PC-3 (cell line): ENCODE measurements at regions of chr5 and their contacts with region 1.

Region 1: DNA sequence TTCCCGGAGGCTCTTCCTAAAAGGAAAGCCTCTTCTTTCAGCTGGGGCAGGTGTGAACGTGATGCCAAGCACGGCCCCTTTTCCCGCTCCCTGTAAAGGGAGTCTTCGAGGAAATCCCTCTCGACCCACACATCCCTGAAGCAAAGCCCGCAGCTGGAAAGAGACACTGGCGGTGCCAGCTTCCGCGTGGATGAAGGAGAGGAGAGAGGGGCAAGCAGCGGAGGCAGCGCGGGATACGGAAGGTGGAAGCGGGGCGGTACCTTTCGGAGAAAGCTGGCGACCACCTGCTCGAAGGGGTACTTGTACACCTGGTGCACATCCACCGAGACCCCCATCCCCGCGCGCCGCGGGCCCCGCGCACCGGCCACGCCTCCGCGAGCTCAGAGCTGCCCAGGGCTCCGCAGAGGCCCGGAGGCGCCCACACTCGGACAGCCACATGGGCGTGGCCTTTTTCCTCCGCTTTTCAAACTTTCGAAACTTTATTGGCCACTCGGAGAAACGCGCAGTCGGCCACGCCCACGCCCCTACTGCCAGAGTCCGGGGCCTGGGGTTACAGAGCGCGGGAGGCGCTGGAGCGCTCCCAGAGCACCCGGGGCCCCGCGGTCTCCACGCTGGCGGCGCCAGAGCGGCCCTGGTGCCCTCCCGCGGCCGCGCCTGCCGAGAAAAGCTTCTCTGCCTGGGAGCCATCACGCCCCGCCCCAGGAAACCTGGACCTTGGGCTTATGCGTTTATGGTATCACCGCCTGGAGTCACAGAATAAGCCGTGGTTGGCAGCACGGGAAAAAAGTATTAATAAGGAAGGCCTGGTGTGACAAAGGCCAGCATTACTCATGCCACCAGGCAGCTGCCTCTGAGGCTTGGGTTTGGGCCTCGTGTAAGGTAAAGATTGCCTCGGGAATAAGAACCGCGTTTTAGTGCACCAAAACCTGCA is at the start of gene PRELID2:
- DNase-seq: peak; percentile 88
- ATAC-seq: peak; percentile 84
- H3K4me3 ChIP-seq: peak within 1 kb of the TSS; percentile 76
- H3K27ac ChIP-seq: peak within 1 kb of the TSS; percentile 27
- H3K4me1 ChIP-seq: peaks cover 12% of the 10 kb centered on the region
- H3K27me3 ChIP-seq: no peaks in the 10 kb centered on the region
- CTCF ChIP-seq: peak; percentile 22; the same call in 1 of the 2 replicates
- total RNA-seq, gene PRELID2: 23.7 and 33.2 TPM in 2 replicates

Region 2: GRCh38 chr5:145872486-145872885 is 37.3 kb after region 1 on chr5:
- CTCF ChIA-PET with region 1: no interaction called
- POLR2A ChIA-PET with region 1: no interaction called
- intact Hi-C with region 1: no loop called
- DNase-seq: no peak
- ATAC-seq: no peak
- H3K4me3 ChIP-seq: no peak overlapping the region
- H3K27ac ChIP-seq: no peak overlapping the region
- H3K4me1 ChIP-seq: no peaks in the 10 kb centered on the region
- H3K27me3 ChIP-seq: no peaks in the 10 kb centered on the region
- CTCF ChIP-seq: no peak

Region 3: DNA sequence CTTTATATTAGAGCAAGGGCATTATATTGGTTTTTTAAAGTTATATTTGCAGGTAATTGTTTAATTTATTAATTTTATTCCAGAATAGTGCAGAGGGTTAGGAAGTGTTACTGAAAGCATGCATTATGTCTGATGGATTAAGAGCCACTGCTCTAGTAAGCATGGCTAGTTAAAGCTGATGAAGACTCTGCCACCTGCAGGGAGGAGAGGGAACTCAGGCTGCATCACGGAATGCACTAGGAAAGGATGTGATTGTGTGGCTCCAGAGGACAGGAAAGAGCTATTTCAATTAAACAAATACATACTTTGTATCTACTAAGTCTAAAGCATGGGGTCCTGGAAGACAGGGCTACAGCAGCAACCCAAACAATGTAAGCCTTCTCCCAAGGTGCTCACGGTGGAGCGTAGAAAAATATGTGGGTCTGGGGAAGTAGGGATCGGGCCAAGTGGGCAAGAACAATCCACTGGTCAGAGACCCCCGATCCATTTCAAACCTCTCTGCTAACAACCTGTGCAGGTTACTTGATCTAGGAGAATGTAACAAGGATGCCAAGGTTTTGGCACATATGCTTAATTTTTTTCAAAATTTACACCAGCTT is 52.9 kb after region 1 on chr5:
- CTCF ChIA-PET with region 1: interaction called, 3 read pairs
- POLR2A ChIA-PET with region 1: no interaction called
- intact Hi-C with region 1: loop called (anchors 2 kb)
- DNase-seq: peak; percentile 68
- ATAC-seq: peak; percentile 99
- H3K4me3 ChIP-seq: no peak overlapping the region
- H3K27ac ChIP-seq: no peak overlapping the region
- H3K4me1 ChIP-seq: no peaks in the 10 kb centered on the region
- H3K27me3 ChIP-seq: no peaks in the 10 kb centered on the region
- CTCF ChIP-seq: peak; percentile 75

Region 4: DNA sequence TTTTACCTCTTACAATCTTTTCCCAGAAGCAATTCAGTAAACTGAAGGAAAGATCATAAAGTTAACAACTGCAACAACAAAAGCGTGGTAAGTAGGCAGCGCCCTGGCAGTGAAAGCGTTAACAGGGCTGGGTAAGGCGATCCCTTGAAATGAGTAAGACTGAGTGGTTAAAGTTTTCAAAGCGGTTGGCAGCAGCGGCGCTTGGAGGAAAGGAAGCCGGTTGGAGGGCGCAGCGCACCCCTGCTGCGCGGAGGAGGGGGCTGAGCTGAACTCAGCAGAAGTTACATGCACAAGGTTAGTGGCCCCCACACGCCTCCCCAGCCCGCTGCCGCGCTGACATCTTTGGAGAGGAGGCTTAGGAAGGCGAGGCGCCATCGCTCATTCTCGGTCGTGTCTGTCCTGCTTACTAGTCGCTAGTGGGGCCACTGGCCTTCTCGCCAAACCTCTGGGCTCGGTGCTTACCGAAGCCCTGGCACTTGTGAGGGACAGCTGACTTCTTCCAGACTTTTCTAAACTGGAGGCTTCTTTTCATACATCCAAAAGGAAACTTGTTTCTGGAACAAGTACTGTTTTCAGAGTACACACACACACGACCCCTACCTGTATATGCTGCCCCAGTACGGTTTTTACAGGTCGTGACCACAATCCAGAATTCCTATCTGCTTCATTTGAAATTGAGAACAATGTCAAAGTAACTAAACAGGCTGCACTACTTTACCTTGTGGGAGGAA is 101.4 kb after region 1 on chr5 and contains the start of gene SH3RF2:
- CTCF ChIA-PET with region 1: no interaction called
- POLR2A ChIA-PET with region 1: no interaction called
- intact Hi-C with region 1: loop called (anchors 1 kb)
- DNase-seq: peak; percentile 75
- ATAC-seq: peak; percentile 79
- H3K4me3 ChIP-seq: peak within 1 kb of the TSS; percentile 86
- H3K27ac ChIP-seq: peak within 1 kb of the TSS; percentile 70
- H3K4me1 ChIP-seq: peaks cover 40% of the 10 kb centered on the region
- H3K27me3 ChIP-seq: no peaks in the 10 kb centered on the region
- CTCF ChIP-seq: no peak
- total RNA-seq, gene SH3RF2: 5.9 and 6.2 TPM in 2 replicates